H1 (cell line): ENCODE measurements at regions of chr7 and their contacts with region 1.

Region 1: GRCh38 chr7:100119062-100119700 is at the starts of genes CNPY4 and TAF6:
- DNase-seq: peak; percentile 89 to 94
- H3K4me3 ChIP-seq: peak within 1 kb of the TSS; percentile 75 to 98 (median 94)
- H3K27ac ChIP-seq: peak within 1 kb of the TSS; percentile 88
- H3K4me1 ChIP-seq: peaks cover 0 to 5% (median 1%) of the 10 kb centered on the region in 4 experiments; a peak in 4 of 7 replicates
- H3K27me3 ChIP-seq: no peaks in the 10 kb centered on the region
- CTCF ChIP-seq: peak in 1 of 3 experiments; percentile 1; a peak in 1 of 4 replicates
- EP300 ChIP-seq: no peak
- POLR2A ChIP-seq: peak; percentile 54 to 66; a peak in 2 of 3 replicates
- RAD21 ChIP-seq: no peak
- total RNA-seq, gene CNPY4: 15.3 and 15.9 TPM in 2 replicates
- total RNA-seq, gene TAF6: 101 and 109 TPM in 2 replicates

Region 2: GRCh38 chr7:100095289-100095688 is 23.9 kb before region 1 on chr7:
- CTCF ChIA-PET with region 1: interaction called, 4 read pairs
- POLR2A ChIA-PET with region 1: interaction called, 722 read pairs
- DNase-seq: no peak
- H3K4me3 ChIP-seq: no peak overlapping the region
- H3K27ac ChIP-seq: no peak overlapping the region
- H3K4me1 ChIP-seq: peaks cover 0 to 8% (median 3%) of the 10 kb centered on the region in 4 experiments; a peak in 3 of 7 replicates
- H3K27me3 ChIP-seq: no peaks in the 10 kb centered on the region
- CTCF ChIP-seq: no peak
- EP300 ChIP-seq: no peak
- POLR2A ChIP-seq: peak; percentile 76 to 85
- RAD21 ChIP-seq: no peak

Region 3: DNA sequence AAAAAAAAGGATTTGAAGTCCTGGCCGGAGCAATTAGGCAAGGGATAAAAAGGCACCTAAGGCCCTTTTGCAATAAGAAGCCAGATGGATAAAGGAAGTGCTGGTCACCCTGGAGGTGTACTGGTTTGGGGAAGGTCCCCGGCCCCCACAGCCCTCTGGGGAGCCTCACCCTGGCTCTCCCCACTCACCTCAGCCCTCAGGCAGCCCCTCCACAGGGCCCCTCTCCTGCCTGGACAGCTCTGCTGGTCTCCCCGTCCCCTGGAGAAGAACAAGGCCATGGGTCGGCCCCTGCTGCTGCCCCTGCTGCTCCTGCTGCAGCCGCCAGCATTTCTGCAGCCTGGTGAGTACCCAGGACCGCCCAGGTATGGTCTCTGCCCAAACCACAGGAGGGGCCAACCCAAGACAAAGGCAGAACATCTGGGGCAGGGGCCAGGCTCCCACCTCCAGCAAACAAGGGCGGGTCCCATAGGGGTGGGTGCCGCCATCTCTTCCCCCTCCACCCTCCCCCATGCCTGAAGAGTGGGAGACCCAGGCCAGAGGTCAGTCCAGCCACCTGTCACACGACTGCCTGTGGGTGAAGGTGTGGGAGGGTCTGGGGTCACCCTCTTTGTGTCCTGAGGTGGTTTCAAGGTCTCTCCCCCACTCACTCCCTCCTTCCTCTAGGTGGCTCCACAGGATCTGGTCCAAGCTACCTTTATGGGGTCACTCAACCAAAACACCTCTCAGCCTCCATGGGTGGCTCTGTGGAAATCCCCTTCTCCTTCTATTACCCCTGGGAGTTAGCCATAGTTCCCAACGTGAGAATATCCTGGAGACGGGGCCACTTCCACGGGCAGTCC is 239.1 kb after region 1 on chr7 and contains the start of gene PILRB:
- CTCF ChIA-PET with region 1: no interaction called
- POLR2A ChIA-PET with region 1: no interaction called
- DNase-seq: no peak
- H3K4me3 ChIP-seq: no peak within 1 kb of the TSS
- H3K27ac ChIP-seq: no peak within 1 kb of the TSS
- H3K4me1 ChIP-seq: no peaks in the 10 kb centered on the region
- H3K27me3 ChIP-seq: no peaks in the 10 kb centered on the region
- CTCF ChIP-seq: no peak
- EP300 ChIP-seq: no peak
- POLR2A ChIP-seq: no peak
- RAD21 ChIP-seq: peak; percentile 16 to 23; a peak in 2 of 4 replicates
- total RNA-seq, gene PILRB: 32.2 and 34.4 TPM in 2 replicates